Body of pancreas (tissue), 4 donors: ENCODE measurements at regions of chr17 and their contacts with region 1.

Region 1: GRCh38 chr17:44066204-44066930 is at the start of gene LSM12:
- DNase-seq: peak; percentile 90 to 93 (median 91)
- ATAC-seq: peak; percentile 85
- H3K4me3 ChIP-seq: peak within 1 kb of the TSS; percentile 48 to 74
- H3K27ac ChIP-seq: peak within 1 kb of the TSS; percentile 72 to 97 (median 93)
- H3K4me1 ChIP-seq: peaks cover 43% of the 10 kb centered on the region
- H3K27me3 ChIP-seq: no peaks in the 10 kb centered on the region
- CTCF ChIP-seq: no peak
- POLR2A ChIP-seq: peak; percentile 62 to 89 (median 84)
- total RNA-seq, gene LSM12: 14.8 to 19.4 TPM

Region 2: DNA sequence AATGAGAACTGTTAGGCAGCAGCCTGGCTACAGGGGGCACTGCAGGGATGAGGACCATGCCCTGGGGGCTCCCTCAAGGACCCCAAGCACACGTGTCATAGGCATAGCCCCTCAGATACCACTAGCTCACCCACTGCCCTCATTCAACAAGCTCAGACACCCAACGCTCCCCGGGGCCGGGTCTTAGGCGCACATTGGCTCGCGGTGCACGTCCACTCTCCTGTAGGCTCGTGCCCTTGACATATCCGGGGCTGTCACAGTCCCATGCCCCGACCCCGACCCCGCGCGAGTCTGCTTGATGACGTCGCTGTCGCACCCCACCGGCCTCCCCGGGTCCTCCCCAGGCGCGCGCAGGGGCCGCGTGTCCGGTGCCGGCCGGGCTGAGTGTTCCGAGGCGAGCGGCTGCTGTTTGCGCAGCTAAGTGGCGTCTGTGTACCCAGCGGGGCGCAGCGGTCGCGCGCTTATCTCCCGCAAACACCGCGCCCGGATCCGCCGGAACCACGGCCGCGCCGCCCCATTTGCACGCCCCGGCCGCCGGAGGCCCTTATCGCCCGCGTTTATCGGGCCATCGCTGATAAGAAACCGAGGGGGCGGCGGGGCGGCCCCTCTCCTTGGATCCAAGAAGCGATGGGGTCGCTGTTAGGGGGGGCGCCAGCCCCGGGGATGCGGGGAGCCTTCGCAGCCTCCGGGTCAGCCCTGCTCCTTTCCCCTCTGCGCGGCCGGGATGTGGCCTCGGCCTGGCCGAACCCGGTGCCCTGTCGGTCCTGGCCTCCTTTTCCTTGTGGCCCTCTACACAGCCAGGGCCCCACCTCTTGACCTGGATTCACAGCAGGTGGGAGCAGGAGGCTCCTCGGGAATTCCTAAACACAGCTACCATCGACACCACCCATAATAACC is 82.6 kb before region 1 on chr17:
- intact Hi-C with region 1: no loop called
- DNase-seq: peak; percentile 20 to 55 (median 38)
- ATAC-seq: peak; percentile 67
- H3K4me3 ChIP-seq: no peak overlapping the region
- H3K27ac ChIP-seq: no peak overlapping the region
- H3K4me1 ChIP-seq: peaks cover 14% of the 10 kb centered on the region
- H3K27me3 ChIP-seq: peaks cover 0 to 6% of the 10 kb centered on the region in 2 donors
- CTCF ChIP-seq: peak in 1 of 7 experiments; percentile 9
- POLR2A ChIP-seq: no peak

Region 3: DNA sequence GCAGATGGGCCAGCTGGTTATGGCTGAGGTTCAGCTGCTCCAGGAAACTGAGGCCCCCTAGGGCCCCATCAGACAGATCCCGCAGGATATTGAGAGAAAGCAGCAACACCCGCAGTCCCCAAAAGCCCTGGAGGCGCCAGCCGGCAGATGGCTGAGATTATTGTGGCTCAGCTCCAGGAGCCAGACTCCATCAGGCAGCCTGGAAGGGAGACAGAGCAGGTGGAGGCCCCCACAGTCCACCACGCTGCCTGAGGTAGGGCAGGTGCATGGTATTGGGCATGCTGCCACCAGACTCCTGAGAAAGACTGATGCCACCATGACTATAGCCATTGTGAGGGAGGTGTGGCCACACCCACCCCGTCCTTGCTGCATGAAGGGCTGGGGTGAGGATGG is 42.1 kb before region 1 on chr17:
- intact Hi-C with region 1: no loop called
- DNase-seq: no peak
- ATAC-seq: peak; percentile 24
- H3K4me3 ChIP-seq: no peak overlapping the region
- H3K27ac ChIP-seq: no peak overlapping the region
- H3K4me1 ChIP-seq: no peaks in the 10 kb centered on the region
- H3K27me3 ChIP-seq: no peaks in the 10 kb centered on the region
- CTCF ChIP-seq: no peak
- POLR2A ChIP-seq: no peak

Region 4: DNA sequence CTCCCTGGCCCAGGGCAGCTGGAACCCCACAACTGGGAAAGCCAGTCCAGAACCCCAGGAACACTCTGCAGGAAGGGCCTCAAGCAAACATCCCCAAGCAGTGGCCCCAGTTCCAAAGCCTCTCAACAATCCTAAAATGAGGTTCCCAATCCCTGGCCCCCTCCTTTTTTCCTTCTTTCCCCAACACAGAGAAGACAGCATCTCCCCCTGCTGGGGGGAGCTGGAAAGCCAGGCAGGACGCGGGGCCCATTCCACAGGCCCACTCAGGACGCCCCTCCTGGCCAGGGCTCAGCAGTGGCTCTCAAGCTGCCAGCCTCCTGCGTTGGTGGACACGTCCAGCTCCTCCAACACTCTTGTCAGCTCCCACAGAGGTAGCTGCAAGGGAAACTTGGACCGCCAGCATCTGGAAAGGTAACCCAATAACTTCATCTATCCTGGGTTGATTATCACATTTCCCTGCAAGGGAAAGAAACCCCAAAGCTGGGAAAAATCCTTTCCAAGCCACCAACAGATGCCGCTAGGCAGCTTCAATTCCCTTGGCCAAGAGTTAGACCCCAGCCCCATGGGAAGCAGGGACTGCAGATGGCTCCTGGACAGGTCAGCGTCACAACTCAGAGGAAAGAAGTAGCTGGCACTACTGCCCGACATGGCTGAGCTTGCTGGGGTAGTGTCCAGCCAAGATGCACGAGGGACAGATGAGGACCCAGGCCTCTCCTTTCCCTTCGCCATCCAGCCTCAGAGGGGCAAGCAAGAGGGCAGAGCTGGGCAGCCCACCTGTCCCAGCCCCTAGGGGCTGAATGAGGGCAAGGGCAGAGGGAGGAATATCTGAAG is 49.4 kb after region 1 on chr17:
- intact Hi-C with region 1: loop called (anchors 5 kb)
- DNase-seq: peak in 1 of 4 donors; percentile 44
- ATAC-seq: no peak
- H3K4me3 ChIP-seq: no peak overlapping the region
- H3K27ac ChIP-seq: no peak overlapping the region
- H3K4me1 ChIP-seq: peaks cover 42% of the 10 kb centered on the region
- H3K27me3 ChIP-seq: no peaks in the 10 kb centered on the region
- CTCF ChIP-seq: peak in 6 of 7 experiments; percentile 35 to 55 (median 49)
- POLR2A ChIP-seq: no peak